Cardiac septum (tissue), 1 donor: ENCODE measurements at regions of chr21 and their contacts with region 1.

Region 1: GRCh38 chr21:39388038-39388810 is 39.3 kb upstream of the HMGN1 start:
- DNase-seq: peak; percentile 96

Region 2: DNA sequence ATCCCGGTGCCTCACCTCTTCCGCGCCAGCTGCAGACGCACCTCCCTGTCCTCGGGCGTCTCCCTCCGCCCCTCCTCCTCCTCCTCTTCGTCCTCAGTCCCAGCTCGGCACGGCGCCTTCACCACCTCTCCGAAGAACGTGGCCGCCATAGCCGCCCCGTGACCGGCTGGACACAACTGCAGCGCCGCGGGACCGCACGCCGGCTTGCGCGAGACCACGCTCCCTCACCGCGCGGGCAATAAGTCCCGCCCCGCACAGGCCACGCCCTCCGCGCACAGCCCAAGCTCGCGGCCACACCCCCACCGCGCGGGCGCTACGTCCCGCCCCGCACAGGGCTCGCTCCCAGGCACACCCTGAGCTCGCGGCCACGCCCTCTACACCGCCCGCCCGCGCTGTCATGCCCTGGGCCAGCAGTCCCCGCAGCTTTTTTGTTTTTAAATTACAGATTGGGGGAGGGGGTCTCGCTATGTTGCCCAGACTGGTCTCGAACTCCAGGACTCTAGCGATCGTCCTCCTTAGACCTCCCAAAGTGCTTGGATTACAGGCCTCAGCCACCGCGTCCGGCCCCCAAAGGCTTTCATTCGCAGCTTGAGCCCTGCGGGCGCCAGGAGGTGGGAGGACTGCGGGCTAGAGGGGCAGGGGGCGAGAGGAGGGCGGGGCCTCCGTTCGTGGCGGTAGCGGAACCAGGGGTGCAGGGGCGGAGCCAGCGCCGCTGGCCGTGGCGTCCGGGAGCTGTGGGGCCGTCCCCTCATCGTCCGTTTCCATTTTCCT is 204.8 kb before region 1 on chr21 and contains the start of gene PSMG1:
- intact Hi-C with region 1: loop called (anchors 10 kb)
- DNase-seq: peak; percentile 98
- total RNA-seq, gene PSMG1: 27.7 TPM

Region 3: DNA sequence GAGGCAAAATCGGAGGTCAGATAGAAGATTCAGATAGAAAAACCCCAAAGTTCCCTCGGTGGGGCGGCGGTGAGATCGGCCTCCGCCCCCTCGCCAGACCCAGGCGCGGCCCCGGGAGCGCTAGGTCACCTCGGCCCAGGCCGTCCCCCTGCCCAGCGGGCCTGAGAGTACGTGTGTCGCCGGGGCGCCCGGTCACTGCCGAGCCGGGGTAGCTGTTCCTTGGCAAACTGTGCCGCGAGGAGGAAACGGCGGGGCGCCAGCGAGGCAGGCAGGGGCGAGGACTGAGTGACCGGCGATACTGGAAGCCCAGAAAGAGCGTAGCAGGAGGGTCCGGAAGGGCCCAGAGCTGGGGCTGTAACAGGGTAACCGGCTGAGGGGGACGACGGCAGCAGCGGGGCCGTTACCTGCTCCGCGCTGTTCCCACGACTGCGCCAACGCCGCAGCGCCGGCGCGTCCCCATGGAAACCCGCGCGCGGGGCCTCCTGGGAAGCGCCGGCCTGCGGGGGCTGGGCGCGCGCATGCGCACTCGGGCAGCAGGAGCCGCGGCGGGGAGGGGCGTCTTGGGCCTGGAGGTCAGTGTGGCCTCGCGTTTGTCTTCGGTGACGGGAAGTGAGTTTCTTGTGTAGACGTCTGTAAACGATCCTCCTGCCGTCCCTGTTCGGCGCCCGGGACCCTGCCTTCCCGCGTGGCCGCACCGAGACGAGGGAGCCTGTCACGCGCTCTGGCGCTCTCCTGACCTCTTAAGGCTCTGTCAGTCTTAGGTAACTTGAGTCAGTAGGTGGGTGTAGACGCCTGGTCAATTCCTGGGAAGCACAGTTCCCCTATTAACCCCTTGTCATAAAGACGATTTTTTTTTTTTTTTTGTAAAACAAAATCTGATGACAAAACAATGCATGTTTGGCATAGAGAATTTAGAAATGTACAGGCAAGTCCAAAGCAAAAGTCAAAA is 57.4 kb after region 1 on chr21 and contains the start of gene LCA5L:
- intact Hi-C with region 1: loop called (anchors 2 kb)
- DNase-seq: peak; percentile 94
- total RNA-seq, gene LCA5L: 1.7 TPM

Region 4: DNA sequence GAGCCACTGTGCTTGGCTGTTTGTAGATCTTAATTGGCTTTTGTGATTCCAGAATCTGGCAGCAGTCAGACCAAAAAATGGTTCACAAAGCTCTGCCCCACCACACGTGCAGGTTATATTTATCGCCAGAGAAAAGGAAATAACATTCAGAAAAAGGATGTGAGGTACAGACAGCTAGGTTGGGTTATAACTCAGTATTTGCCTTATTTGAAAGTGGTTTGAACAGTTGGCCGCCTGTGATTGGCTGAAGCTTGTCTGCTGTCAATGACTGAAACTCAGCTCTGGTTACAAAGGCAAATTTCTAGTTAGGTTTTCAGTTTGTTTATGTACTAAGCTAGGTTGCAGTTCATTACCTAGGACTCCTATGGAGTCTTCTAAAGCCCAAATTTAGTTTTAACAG is 73.2 kb after region 1 on chr21:
- intact Hi-C with region 1: no loop called
- DNase-seq: no peak